ENCODE measurements at regions of chr6 and their contacts with region 1.

Region 1: DNA sequence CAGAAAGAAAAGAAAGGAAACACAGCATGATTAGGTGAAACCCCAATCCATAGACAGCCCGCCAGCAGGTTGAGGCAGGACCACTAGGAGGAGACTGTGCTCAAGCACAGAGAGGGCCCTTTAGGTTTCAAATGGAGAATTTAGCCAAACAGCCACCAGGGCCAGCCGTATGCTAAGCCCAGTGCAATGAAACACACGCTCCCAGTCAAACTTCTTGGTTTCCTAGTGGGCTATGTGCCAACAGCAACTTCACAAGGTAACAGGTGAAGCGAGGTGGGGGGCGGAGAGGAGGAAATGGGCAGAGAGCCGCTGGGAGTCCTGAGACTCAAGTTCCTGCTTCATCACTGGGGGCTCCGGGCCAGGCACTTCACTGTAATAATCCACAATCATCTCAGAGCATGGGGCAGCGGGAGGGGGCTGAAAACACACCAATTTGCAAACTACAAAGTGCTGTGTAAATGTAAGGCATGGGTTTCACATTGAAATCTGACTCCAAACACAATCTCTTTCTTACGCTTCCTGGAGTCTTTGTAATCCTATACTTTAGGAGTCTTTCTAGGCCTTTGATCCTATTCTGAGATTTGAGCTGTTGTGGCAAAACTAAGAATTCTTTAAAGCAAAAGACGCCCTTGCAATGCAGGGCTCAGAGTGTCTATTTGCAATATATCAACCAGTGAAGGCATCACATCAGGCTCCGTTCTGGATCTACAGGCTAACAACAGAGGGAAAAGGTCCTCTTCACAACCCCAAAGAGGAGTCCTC is 117.3 kb downstream of the OPRM1 start:
- DNase-seq: peak; percentile 34 to 84 (median 60)
- ATAC-seq: peak; percentile 92
- H3K4me3 ChIP-seq: peak overlapping the region; percentile 28 to 40
- H3K4me3 Mint-ChIP-seq: peak overlapping the region; percentile 82
- H3K27ac ChIP-seq: peak overlapping the region; percentile 42 to 83
- H3K27ac Mint-ChIP-seq: peak overlapping the region; percentile 92
- H3K4me1 ChIP-seq: peaks cover 37% of the 10 kb centered on the region
- H3K4me1 Mint-ChIP-seq: peaks cover 56% of the 10 kb centered on the region
- H3K27me3 ChIP-seq: no peaks in the 10 kb centered on the region
- H3K27me3 Mint-ChIP-seq: no peaks in the 10 kb centered on the region
- CTCF ChIP-seq: peak; percentile 76

Region 2: GRCh38 chr6:154197196-154197860 is 41.0 kb after region 1 on chr6:
- CTCF ChIA-PET with region 1: interaction called, 12 read pairs
- POLR2A ChIA-PET with region 1: no interaction called
- intact Hi-C with region 1: loop called in 1 of 2 experiments (anchors 5 kb)
- DNase-seq: no peak
- ATAC-seq: no peak
- H3K4me3 ChIP-seq: no peak overlapping the region
- H3K4me3 Mint-ChIP-seq: peak overlapping the region; percentile 26
- H3K27ac ChIP-seq: no peak overlapping the region
- H3K27ac Mint-ChIP-seq: peak overlapping the region; percentile 55
- H3K4me1 ChIP-seq: peaks cover 17% of the 10 kb centered on the region
- H3K4me1 Mint-ChIP-seq: peaks cover 77% of the 10 kb centered on the region
- H3K27me3 ChIP-seq: no peaks in the 10 kb centered on the region
- H3K27me3 Mint-ChIP-seq: no peaks in the 10 kb centered on the region
- CTCF ChIP-seq: no peak

Region 3: GRCh38 chr6:154247119-154247861 is 91.0 kb after region 1 on chr6:
- CTCF ChIA-PET with region 1: interaction called, 37 read pairs
- POLR2A ChIA-PET with region 1: interaction called, 3 read pairs
- intact Hi-C with region 1: no loop called
- DNase-seq: peak in 4 of 9 experiments; percentile 45 to 79 (median 60)
- ATAC-seq: peak; percentile 43
- H3K4me3 ChIP-seq: peak overlapping the region; percentile 60 to 69
- H3K4me3 Mint-ChIP-seq: peak overlapping the region; percentile 94
- H3K27ac ChIP-seq: peak overlapping the region; percentile 75 to 92
- H3K27ac Mint-ChIP-seq: peak overlapping the region; percentile 93
- H3K4me1 ChIP-seq: peaks cover 65% of the 10 kb centered on the region
- H3K4me1 Mint-ChIP-seq: peaks cover 83% of the 10 kb centered on the region
- H3K27me3 ChIP-seq: no peaks in the 10 kb centered on the region
- H3K27me3 Mint-ChIP-seq: no peaks in the 10 kb centered on the region
- CTCF ChIP-seq: no peak

Region 4: GRCh38 chr6:154408891-154409500 is 252.7 kb after region 1 on chr6:
- CTCF ChIA-PET with region 1: interaction called, 4 read pairs
- POLR2A ChIA-PET with region 1: no interaction called
- intact Hi-C with region 1: loop called in 1 of 2 experiments (anchors 1 kb)
- DNase-seq: peak in 2 of 9 experiments; percentile 2 to 11
- ATAC-seq: no peak
- H3K4me3 ChIP-seq: no peak overlapping the region
- H3K4me3 Mint-ChIP-seq: no peak overlapping the region
- H3K27ac ChIP-seq: no peak overlapping the region
- H3K27ac Mint-ChIP-seq: no peak overlapping the region
- H3K4me1 ChIP-seq: no peaks in the 10 kb centered on the region
- H3K4me1 Mint-ChIP-seq: no peaks in the 10 kb centered on the region
- H3K27me3 ChIP-seq: no peaks in the 10 kb centered on the region
- H3K27me3 Mint-ChIP-seq: no peaks in the 10 kb centered on the region
- CTCF ChIP-seq: no peak

Region 5: DNA sequence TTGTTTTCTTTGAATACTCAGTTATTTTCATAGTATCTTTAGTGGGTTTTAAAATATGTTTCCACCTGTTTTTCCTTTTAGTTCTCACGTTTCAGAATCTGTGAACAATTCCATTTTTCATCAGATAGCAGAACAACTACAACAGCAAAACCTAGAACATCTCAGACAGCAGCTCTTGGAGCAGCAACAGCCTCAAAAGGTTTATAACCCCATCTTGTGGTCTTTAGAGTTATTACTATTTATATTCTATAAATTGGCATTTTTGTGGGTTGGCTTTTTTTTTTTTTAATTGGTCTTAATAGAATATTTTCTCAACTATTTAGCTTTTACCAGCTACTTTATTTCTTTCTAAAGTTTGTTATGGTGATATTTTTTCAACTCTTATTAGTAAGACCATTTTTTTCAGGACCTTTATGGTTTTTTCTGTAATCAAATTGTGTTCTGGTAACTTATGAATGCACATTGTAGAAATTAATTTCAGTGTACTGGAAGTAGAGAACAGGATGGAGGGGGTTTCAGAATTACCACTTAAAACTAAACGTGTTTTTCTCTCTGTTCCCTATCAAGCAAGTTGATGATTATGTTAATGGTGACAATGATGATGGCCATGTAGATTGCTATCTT is 649.1 kb after region 1 on chr6:
- CTCF ChIA-PET with region 1: no interaction called
- POLR2A ChIA-PET with region 1: no interaction called
- intact Hi-C with region 1: loop called in 1 of 2 experiments (anchors 5 kb)
- DNase-seq: peak in 2 of 9 experiments; percentile 57 to 67
- ATAC-seq: peak; percentile 81
- H3K4me3 ChIP-seq: no peak overlapping the region
- H3K4me3 Mint-ChIP-seq: no peak overlapping the region
- H3K27ac ChIP-seq: no peak overlapping the region
- H3K27ac Mint-ChIP-seq: no peak overlapping the region
- H3K4me1 ChIP-seq: no peaks in the 10 kb centered on the region
- H3K4me1 Mint-ChIP-seq: peaks cover 3% of the 10 kb centered on the region
- H3K27me3 ChIP-seq: no peaks in the 10 kb centered on the region
- H3K27me3 Mint-ChIP-seq: no peaks in the 10 kb centered on the region
- CTCF ChIP-seq: peak; percentile 63